ENCODE measurements at regions of chr7 and their contacts with region 1.

Region 1: DNA sequence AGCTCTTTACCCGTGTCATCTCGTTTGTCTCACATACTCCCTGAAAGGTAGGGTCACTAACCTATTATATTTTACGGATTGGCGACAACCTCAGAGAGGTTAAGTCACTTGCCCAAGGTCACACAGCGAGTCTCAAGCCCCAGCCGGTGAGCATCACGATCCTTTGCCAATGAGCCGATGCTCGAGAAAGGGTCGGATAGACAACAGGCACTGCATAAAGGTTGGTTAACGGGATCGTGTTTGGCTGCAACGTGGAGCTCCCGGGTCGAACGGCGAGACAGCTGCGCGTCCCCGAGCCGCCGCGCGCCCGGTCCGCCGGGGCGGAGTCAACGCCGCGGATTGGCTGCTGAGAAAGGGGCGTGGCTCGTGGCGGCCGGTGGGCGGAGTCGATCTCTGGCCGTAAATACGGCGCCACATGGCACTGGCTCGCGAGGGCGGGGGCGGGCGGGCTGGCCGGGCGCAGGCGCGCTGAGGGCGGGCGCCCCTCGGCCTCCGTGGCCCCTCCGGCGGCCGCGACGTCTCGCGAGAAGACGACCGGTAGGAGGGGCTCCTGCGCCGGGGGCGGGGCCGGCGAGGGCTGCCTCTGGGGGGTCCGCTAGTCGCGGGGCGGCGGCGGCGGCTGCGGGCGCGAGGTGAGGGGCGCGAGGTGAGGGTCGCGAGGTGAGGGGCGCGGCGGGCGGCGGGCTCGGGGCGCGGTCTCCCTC is at the start of gene CHST12:
- DNase-seq: peak; percentile 79 to 98
- H3K4me3 ChIP-seq: peak within 1 kb of the TSS; percentile 74
- H3K27ac ChIP-seq: no peak within 1 kb of the TSS
- H3K4me1 ChIP-seq: peaks cover 29% of the 10 kb centered on the region
- H3K27me3 ChIP-seq: no peaks in the 10 kb centered on the region
- CTCF ChIP-seq: no peak
- total RNA-seq, gene CHST12: 25.9 and 41.1 TPM in 2 replicates

Region 2: GRCh38 chr7:2373124-2373556 is 30.0 kb before region 1 on chr7:
- CTCF ChIA-PET with region 1: interaction called, 11 read pairs
- POLR2A ChIA-PET with region 1: interaction called, 7 read pairs
- intact Hi-C with region 1: no loop called
- DNase-seq: no peak
- H3K4me3 ChIP-seq: no peak overlapping the region
- H3K27ac ChIP-seq: no peak overlapping the region
- H3K4me1 ChIP-seq: no peaks in the 10 kb centered on the region
- H3K27me3 ChIP-seq: no peaks in the 10 kb centered on the region
- CTCF ChIP-seq: no peak

Region 3: GRCh38 chr7:2420216-2420933 is 17.2 kb after region 1 on chr7:
- CTCF ChIA-PET with region 1: no interaction called
- POLR2A ChIA-PET with region 1: interaction called, 19 read pairs
- intact Hi-C with region 1: no loop called
- DNase-seq: no peak
- H3K4me3 ChIP-seq: no peak overlapping the region
- H3K27ac ChIP-seq: no peak overlapping the region
- H3K4me1 ChIP-seq: peaks cover 10% of the 10 kb centered on the region
- H3K27me3 ChIP-seq: no peaks in the 10 kb centered on the region
- CTCF ChIP-seq: no peak

Region 4: DNA sequence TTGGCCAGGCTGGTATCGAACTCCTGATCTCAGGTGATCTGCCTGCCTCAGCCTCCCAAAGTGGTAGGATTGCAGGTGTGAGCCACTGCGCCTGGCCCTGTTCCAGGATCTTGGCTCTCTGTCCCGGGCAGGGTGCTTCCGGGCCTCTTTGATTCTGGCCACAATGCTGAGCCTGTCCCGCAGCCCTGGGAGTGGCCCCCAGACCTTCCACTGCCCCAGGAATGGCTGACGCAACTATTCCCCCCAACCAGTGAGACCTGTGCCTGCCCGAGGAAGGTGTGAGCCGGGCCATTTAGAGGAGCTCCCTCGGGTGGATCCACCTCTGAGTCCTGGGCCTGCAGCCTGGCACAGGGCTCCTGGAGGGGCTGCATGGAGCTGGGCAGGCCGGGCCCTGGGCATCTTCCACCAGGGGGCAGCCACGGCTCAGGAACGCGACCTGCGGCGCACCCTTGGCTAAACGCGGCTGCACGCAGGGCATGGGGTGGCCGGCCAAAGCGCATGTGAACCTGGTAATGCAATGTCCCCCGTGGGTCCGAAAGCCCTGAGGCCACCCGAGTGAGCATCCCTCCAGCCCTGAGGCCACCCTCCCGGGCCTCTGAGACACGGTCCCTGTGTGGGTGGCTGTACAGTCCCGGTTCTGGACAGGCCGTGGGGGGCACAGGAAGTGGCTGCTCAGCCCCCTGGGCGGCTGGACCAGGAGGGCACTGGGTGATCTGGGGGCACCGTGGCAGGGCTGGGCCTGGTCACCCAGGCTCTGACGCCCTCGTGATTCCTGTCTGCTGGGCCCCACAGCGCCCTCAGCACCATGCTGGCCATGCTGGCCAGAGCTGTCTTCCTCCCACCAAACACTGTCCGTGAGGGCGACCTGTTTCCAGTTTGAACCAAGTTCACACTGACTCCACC is 48.3 kb after region 1 on chr7:
- CTCF ChIA-PET with region 1: no interaction called
- POLR2A ChIA-PET with region 1: no interaction called
- intact Hi-C with region 1: loop called (anchors 2 kb)
- DNase-seq: peak; percentile 67 to 95
- H3K4me3 ChIP-seq: peak overlapping the region; percentile 39; the same call in 1 of the 2 replicates
- H3K27ac ChIP-seq: no peak overlapping the region
- H3K4me1 ChIP-seq: peaks cover 8% of the 10 kb centered on the region; the same call in 1 of the 2 replicates
- H3K27me3 ChIP-seq: no peaks in the 10 kb centered on the region
- CTCF ChIP-seq: peak; percentile 91

Region 5: DNA sequence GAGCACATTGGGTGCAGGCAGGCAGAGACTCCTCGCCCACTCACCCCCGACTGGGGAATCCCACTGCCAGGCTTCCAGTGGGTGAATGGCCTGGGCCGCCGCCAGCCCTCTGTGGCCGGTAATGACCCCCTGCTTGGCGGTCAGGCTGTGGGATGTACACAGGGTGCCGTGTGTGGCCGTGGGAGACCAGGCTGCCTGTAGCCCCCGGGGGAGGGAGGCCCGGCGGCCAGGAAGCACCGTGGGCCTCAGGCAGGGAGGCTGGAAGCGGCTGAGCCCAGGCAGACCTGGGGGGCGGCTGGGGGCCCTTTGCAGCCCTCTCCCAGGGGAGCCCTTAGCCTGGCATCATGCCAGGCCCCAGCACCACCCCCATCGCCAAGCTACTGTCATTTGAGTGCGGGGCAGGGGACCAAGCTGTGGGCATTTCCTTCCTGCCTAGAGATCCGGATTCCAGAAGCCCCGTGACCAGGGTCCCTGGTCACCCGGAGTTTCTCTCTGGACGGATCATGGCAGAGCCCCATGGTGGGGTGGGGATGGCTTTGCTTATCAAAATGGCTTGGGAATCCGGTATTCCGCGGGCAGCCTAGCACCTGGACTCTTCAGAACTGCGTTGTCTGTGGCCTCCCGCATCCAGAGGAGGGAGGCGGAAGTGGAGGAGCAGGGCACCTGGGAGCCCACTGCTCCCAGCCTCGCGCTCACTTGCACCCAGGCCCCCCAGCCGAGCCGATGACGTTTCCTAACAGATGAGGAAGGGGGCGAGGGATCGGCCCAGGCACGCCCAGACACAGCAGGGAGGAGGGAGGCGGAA is 229.8 kb after region 1 on chr7:
- CTCF ChIA-PET with region 1: interaction called, 13 read pairs
- POLR2A ChIA-PET with region 1: interaction called, 4 read pairs
- intact Hi-C with region 1: no loop called
- DNase-seq: peak in 1 of 2 experiments; percentile 56
- H3K4me3 ChIP-seq: peak overlapping the region; percentile 87
- H3K27ac ChIP-seq: peak overlapping the region; percentile 45
- H3K4me1 ChIP-seq: peaks cover 22% of the 10 kb centered on the region
- H3K27me3 ChIP-seq: no peaks in the 10 kb centered on the region
- CTCF ChIP-seq: no peak

Measured in PC-9 (cell line).